Panc1 (cell line): ENCODE measurements at regions of chr18 and their contacts with region 1.

Region 1: DNA sequence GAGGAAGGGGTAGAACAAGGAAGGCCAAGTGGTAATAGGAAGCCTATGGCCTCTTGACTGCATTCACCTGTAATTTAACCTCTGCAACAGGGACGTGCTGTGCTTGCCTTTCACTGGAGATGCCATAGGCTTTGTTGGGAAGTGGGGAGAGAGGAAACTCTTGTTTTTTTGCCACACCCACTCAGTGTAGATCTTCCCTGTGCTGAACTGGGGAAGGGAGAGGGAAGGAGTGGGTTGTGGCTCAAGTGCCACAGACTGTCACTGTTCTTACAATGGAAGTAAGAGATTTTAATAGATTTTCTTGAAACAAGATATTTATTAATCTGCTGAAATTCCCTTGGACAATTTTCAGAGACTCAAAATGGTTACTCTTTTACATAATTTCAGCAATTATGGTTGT is 127.3 kb downstream of the FAM210A start:
- DNase-seq: no peak
- ATAC-seq: no peak
- H3K4me3 ChIP-seq: no peak overlapping the region
- H3K27ac ChIP-seq: no peak overlapping the region
- H3K4me1 ChIP-seq: no peaks in the 10 kb centered on the region
- H3K27me3 ChIP-seq: no peaks in the 10 kb centered on the region
- CTCF ChIP-seq: no peak

Region 2: GRCh38 chr18:13611601-13612195 is 12.7 kb after region 1 on chr18:
- CTCF ChIA-PET with region 1: no interaction called
- POLR2A ChIA-PET with region 1: interaction called, 13 read pairs
- in situ Hi-C with region 1: no loop called
- intact Hi-C with region 1: no loop called
- DNase-seq: no peak
- ATAC-seq: peak; percentile 70; the same call in 1 of the 2 replicates
- H3K4me3 ChIP-seq: peak overlapping the region; percentile 9 to 20; a peak in 3 of 4 replicates
- H3K27ac ChIP-seq: no peak overlapping the region
- H3K4me1 ChIP-seq: no peaks in the 10 kb centered on the region
- H3K27me3 ChIP-seq: peaks cover 8% of the 10 kb centered on the region; the same call in 1 of the 2 replicates
- CTCF ChIP-seq: no peak